Activated T-helper 1 cell treated with anti-CD3 and anti-CD28 coated beads, Interleukin-12 subunit alpha, Interleukin-12 subunit beta, Interleukin-2, Interleukin-4 antibody, amounts not matched to agents 30 ng/mL and 10 ng/mL and 1 ng/mL, durations not matched to agents 14 hours and 24 hours and 36 hours (primary cell): ENCODE measurements at regions of chr2 and their contacts with region 1.

Region 1: DNA sequence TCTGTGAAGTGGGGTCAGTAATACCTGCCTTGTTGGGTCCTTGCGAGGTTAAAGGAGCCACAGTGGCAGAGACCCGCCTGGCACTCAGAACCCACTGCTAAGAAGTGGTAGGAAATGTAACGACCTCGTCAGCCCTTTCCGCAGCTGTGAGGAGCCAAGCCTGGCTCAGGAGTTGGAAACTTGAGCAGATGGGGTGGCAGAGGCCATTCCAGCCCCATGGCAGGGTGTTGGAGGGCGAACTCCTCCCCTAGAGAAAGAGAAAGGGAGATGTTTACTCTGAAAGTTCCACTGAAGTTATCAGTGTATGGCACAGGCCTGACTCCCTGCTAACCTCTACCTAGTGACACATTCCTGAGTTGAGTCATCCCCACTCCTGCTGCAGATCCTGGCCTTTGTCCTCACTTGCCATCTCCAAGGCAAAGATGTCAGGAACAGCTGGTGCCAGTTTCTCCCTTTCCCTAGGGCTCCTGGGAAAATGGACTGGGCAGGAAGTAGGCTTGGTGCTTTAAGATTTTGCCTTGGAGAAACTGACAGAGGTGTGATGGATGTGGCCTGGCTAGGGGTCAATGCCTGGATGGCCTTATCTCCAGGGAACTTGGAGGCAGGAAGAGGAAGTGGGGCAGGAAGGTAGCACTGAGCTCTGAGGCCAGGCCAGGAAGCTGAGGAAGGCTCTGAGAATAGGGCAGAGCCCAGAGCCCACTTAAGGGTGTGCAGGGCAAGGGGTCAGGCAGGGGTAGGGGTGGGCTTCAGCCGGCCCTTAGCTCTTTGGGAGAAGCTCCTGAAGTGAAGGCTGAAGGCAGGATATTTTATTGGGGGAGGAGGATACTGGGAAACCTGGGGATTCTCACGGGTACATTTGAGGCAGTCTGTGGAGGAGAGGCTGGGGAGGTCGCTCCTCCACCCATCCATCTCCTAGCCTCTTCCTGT is 889 bp downstream of the VAMP5 start:
- DNase-seq: no peak
- H3K4me3 Mint-ChIP-seq: peak overlapping the region; percentile 88
- H3K27ac Mint-ChIP-seq: peak overlapping the region; percentile 94
- H3K4me1 Mint-ChIP-seq: peaks cover 43% of the 10 kb centered on the region
- H3K27me3 Mint-ChIP-seq: no peaks in the 10 kb centered on the region

Region 2: GRCh38 chr2:85602476-85603234 is 17.5 kb after region 1 on chr2 and contains the start of gene TMEM150A:
- intact Hi-C with region 1: loop called (anchors 2 kb)
- DNase-seq: peak; percentile 80
- H3K4me3 Mint-ChIP-seq: peak within 1 kb of the TSS; percentile 87
- H3K27ac Mint-ChIP-seq: peak within 1 kb of the TSS; percentile 35
- H3K4me1 Mint-ChIP-seq: peaks cover 11% of the 10 kb centered on the region
- H3K27me3 Mint-ChIP-seq: no peaks in the 10 kb centered on the region
- total RNA-seq, gene TMEM150A: 7.0 and 8.9 TPM in 2 replicates

Region 3: DNA sequence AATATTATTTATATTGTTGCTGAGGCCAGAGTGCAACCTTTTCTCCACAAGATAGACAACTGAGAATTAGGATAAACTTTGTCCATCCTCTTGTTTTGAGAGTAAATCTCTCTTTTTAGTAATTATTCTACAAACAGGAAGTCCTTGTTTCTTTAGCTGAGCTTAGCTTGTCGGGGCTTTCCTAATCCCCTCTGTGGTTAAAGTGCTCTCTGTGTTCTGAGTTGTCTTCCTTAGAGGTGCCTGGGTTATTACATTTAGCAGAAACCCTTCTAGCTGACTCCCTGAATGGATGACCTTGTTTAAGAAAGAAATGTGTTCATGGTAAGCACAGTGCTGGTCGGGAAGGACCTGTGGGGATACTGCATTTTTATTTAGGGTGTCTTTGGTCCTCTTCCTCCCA is 43.5 kb after region 1 on chr2:
- intact Hi-C with region 1: no loop called
- DNase-seq: no peak
- H3K4me3 Mint-ChIP-seq: peak overlapping the region; percentile 33
- H3K27ac Mint-ChIP-seq: peak overlapping the region; percentile 79
- H3K4me1 Mint-ChIP-seq: peaks cover 25% of the 10 kb centered on the region
- H3K27me3 Mint-ChIP-seq: no peaks in the 10 kb centered on the region

Region 4: DNA sequence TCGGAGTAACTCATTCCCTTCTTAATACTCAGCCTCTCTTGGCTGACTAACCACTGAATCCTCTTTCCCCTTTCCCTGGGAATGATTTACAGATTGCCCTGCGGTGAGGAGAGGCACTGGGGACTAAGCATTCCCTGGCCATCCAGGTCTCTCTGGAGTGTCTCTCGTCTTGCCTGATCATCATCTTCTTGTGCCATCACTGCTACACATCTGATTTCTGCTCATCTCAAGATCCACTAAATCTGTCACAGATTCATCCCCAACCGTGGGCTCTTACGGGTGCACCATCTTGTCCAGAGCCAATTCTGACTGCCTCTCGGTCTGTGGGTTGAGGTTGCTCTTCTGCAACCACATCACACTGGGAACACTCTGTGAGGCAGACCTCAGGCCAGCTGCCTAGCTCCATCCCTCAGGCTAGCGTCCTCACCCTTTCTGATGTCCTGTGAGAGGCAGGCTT is 70.9 kb after region 1 on chr2:
- intact Hi-C with region 1: no loop called
- DNase-seq: no peak
- H3K4me3 Mint-ChIP-seq: no peak overlapping the region
- H3K27ac Mint-ChIP-seq: no peak overlapping the region
- H3K4me1 Mint-ChIP-seq: no peaks in the 10 kb centered on the region
- H3K27me3 Mint-ChIP-seq: no peaks in the 10 kb centered on the region